Right cardiac atrium (tissue), 5 donors: ENCODE measurements at regions of chr5 and their contacts with region 1.

Region 1: GRCh38 chr5:169701910-169702451 is 64.9 kb downstream of the DOCK2 start:
- DNase-seq: no peak
- ATAC-seq: no peak
- H3K4me3 ChIP-seq: no peak overlapping the region
- H3K27ac ChIP-seq: no peak overlapping the region
- H3K4me1 ChIP-seq: no peaks in the 10 kb centered on the region
- H3K27me3 ChIP-seq: no peaks in the 10 kb centered on the region

Region 2: DNA sequence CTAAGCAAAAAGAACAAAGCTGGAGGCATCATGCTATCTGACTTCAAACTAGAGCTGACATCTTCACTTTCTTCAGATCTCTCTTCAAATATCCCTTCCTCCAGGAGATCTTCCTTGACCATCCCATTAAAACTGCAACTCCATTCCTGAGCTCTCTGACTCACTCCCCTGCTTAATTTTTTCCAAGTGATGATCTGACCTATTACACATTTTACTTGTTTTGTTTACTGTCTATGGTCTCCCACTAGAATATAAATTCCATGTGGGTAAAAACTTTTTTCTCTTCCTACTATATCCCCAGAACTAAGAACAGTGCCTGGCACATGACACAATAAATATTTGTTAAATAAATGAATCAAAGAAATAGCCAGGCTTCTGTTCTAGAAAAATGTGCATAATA is 488.5 kb before region 1 on chr5:
- intact Hi-C with region 1: no loop called
- DNase-seq: no peak
- ATAC-seq: no peak
- H3K4me3 ChIP-seq: no peak overlapping the region
- H3K27ac ChIP-seq: no peak overlapping the region
- H3K4me1 ChIP-seq: no peaks in the 10 kb centered on the region
- H3K27me3 ChIP-seq: no peaks in the 10 kb centered on the region

Region 3: DNA sequence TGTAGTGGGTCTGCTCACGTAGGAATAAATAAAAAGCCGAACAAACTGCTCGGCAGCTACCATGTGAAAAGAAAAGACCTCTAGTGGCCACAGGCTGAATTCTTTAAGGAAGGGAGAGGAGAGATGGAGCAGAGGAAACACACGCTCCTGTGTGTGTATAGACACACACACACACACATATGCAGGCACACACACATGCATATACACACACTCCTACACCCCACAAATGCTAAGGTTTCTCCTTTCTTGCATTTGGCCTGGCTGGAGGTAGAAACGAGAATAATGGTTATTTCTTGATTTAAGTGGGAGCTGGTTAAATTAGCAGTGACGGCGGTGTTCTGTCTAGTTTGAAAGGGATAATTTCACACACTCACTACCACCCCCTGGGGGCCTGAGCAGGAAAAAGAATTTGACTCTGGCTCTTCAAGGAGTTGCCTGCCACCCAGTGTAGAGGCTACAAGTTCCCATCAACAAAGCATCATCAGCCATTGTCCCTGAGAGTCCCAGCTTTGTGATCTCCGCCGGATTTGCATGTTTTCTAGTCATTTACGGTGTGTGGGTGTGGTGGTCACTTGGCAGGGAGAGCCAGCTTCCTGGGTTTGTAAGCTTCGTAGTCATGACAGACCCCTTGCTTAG is 278.6 kb after region 1 on chr5 and contains the start of gene INSYN2B:
- intact Hi-C with region 1: loop called (anchors 5 kb)
- DNase-seq: peak; percentile 69 to 88 (median 74)
- ATAC-seq: peak; percentile 90
- H3K4me3 ChIP-seq: peak within 1 kb of the TSS; percentile 45
- H3K27ac ChIP-seq: no peak within 1 kb of the TSS
- H3K4me1 ChIP-seq: no peaks in the 10 kb centered on the region
- H3K27me3 ChIP-seq: peaks cover 4% of the 10 kb centered on the region
- total RNA-seq, gene INSYN2B: 0.14 to 1.4 (median 0.41) TPM

Region 4: DNA sequence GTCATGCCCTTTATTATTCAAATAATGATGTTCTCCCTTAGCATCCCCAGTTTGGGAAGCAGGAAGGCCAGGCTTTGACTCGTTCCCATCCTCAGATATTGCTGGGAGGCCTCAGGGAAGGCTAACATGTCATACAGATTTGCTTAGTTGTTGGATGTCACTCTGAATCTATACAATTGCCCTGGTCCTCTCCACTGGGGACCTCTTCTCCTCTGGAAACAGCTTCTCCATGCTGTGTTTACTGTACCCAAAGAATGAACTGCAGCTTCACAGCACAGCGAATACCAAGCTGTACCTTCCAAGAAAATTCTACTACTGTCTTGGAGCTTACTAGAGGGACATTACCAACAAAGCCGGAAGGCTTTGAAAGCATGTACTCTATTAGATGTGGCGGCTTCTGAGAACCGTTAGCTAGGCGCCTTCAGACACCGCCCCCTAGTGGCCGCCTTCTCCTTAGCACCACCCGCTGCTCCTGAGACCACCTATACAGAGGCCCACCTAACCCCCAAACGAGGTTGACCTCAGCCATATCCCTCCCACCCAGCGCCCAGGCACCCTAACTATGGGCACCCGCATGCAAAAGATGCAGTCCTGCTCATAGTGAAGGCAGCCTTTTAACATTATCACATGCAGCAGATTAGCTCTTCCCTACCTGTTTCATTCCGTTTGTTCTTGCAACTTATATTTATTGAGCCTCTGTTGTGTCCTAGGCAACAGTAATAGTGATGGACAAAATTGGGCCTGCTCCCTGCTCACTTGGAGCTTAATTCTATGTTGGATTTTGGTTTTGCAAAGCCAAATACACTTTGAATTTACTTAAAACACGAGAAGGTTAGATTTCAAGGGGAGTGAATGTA is 368.8 kb after region 1 on chr5:
- intact Hi-C with region 1: loop called in 2 of 4 experiments (anchors 5 to 10 kb)
- DNase-seq: peak in 2 of 3 donors; percentile 66 to 78
- ATAC-seq: peak; percentile 58 to 61
- H3K4me3 ChIP-seq: no peak overlapping the region
- H3K27ac ChIP-seq: no peak overlapping the region
- H3K4me1 ChIP-seq: no peaks in the 10 kb centered on the region
- H3K27me3 ChIP-seq: no peaks in the 10 kb centered on the region

Region 5: DNA sequence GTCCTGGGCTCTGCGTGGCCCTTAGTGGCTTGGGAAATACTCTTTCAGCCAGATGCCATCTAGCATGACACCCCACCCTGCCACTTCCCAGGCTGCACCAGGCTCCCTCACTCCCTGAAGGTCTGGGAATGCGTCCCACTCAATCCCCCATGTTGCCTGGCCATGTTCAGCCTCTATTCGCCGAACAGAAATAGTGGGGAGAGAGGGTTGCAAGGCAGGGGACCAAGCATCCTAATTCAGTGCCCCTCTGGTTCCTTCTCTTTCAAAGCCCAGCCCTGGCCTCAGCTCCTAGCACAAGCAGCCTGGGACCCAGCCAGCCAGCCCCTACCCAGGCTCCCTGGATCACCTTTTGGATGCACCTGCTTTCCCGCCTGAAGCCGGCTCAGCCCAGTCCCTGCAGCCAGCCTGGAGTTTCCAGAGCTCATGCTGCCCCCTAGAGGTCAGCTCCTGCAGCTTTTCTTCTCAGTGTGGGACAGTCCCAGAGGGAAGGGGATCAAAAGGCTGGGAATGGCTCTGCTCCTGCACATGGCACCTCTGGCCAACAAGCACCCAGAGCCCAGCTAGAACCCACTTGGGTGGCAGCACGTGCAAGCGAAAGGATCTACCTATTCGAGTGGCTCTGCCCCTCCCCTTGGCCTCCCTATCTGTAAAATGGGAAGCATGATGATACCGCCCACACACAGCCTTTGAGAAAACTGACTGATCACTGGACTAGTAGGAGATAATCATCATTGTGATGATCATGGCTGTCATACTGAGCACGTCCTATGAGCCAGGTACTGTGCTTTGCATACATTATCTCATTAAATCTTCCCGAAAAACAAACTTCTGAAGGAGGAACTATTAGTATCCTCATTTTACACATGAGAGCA is 482.1 kb after region 1 on chr5:
- intact Hi-C with region 1: loop called in 1 of 4 experiments (anchors 10 kb)
- DNase-seq: peak; percentile 59 to 83 (median 72)
- ATAC-seq: peak; percentile 78 to 80
- H3K4me3 ChIP-seq: no peak overlapping the region
- H3K27ac ChIP-seq: no peak overlapping the region
- H3K4me1 ChIP-seq: no peaks in the 10 kb centered on the region
- H3K27me3 ChIP-seq: no peaks in the 10 kb centered on the region